ENCODE measurements at regions of chr11 and their contacts with region 1.

Region 1: DNA sequence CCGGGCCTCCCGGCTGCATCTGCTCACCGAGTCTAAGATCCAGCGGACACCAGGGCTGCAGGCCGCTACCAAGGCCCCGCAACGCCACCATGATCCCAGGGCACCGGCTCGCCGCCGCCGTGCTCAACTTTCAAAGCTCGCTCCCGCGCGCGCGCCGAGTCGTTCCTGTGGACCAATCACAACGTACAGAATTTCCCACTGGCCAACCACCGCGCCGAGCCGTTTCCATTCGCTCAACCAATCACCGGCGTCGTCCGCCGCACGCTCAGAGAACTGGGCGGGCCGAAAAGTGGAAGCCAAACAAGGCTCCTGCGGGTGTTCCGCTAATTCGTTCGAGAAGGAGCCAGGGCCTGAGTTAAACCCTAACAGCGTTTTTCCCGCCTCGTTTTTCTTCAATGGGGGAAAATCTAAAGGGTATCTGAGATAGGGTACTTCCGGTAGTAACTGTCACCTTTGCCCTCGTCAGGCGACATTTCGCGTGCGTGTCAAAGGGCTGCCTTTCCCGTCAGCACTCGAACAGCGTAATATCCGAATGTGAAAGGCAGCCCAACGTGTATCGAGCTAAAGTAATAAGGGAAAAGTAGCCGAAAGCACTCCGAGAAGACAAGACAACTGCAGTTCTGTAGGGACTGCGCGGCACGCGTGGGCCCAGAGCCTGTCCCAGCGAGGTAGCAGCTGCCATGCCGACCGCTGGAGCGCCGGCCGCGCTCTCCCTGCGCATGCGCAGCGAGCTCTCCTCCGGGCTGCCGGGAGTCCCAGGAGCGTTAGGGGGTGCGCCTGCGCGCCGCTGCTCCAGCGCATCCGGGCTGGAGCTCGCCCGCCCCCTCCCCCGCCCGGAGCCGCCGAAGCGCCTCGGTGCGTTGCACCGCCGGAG is at the starts of genes NCAPD3 and VPS26B:
- DNase-seq: peak; percentile 90 to 98 (median 96)
- ATAC-seq: peak; percentile 77
- H3K4me3 ChIP-seq: peak within 1 kb of the TSS; percentile 71 to 88
- H3K4me3 Mint-ChIP-seq: peak within 1 kb of the TSS; percentile 96
- H3K27ac ChIP-seq: peak within 1 kb of the TSS; percentile 84 to 96
- H3K27ac Mint-ChIP-seq: peak within 1 kb of the TSS; percentile 97
- H3K4me1 ChIP-seq: peaks cover 45% of the 10 kb centered on the region
- H3K4me1 Mint-ChIP-seq: peaks cover 65% of the 10 kb centered on the region
- H3K27me3 ChIP-seq: no peaks in the 10 kb centered on the region
- H3K27me3 Mint-ChIP-seq: no peaks in the 10 kb centered on the region
- CTCF ChIP-seq: no peak
- total RNA-seq, gene NCAPD3: 30.2 to 30.4 TPM
- total RNA-seq, gene VPS26B: 36.8 to 37.8 TPM

Region 2: DNA sequence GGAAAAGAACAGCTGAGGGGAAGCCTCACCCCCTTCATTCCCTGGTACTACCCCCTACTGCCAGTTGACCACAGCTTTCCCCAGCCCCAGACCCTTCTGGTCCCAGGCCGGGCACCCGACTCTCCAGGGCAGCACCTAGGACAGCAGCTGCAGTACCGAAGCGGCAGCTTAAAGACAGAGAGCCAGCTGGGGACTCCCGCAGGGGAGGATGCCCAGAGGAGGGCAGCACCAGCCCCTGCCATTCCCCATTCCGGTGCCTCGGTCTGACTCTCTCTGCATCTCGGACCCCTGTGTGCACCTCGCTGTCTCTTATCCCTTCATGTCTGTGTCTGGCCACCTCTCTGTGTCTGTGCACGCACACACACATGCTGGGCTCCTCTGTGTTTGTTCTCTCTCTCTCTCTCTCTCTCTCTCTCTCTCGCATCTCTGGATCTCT is 276.7 kb before region 1 on chr11:
- CTCF ChIA-PET with region 1: no interaction called
- POLR2A ChIA-PET with region 1: no interaction called
- intact Hi-C with region 1: loop called in 1 of 2 experiments (anchors 5 kb)
- DNase-seq: peak; percentile 41 to 81 (median 68)
- ATAC-seq: peak; percentile 32
- H3K4me3 ChIP-seq: peak overlapping the region in 1 of 2 experiments; percentile 7
- H3K4me3 Mint-ChIP-seq: peak overlapping the region; percentile 60
- H3K27ac ChIP-seq: no peak overlapping the region
- H3K27ac Mint-ChIP-seq: peak overlapping the region; percentile 79
- H3K4me1 ChIP-seq: peaks cover 58% of the 10 kb centered on the region
- H3K4me1 Mint-ChIP-seq: peaks cover 51% of the 10 kb centered on the region
- H3K27me3 ChIP-seq: peaks cover 0 to 10% of the 10 kb centered on the region in 2 experiments
- H3K27me3 Mint-ChIP-seq: no peaks in the 10 kb centered on the region
- CTCF ChIP-seq: peak; percentile 24

Region 3: DNA sequence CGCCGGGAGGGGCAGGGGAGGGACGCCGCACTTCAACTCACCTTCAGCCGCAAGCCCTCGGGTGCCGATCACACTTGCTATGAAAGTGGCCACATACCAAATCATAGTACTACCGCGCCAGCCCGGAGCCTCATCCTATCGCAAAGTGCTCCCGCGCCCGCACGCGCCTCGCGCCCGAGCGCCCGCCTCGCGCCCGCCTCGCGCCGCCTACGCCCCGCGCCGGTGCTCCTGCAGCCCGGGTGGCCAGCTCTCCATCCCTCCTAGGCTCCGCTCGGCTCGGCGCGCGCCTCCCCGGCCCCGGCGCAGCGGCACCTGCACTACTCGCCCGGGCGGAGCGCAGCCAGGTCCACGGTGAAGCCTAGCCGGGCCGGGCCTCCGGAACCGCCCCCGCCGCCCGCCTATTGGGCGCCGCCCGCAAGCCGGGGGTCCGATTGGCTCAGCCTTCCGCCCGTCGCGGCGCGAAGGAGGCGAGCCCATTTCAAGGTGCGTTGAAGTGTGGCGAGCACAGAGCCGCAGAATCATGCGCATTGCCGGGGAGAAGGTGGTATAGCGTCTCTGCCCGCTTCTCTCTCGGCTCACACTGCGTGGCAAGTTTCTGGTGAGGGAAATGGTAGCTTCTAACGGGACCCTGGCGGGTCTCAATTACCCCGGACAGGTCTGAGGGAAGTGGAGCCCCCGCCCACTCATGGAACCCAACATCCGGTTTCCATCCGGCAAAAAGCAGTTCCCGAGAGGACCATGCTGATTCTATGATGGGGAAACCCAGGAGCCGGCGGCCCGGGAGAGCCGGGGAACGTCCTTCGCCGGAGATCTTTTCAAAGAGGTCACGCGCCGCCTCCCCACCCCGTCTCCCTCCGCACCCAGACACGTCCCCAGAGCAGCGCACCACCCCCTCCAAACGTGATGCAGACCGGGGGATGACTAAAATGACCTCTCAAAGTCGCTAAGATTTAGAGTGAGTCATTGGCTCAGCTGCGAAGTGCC is 267.1 kb before region 1 on chr11 and contains the start of gene IGSF9B:
- CTCF ChIA-PET with region 1: no interaction called
- POLR2A ChIA-PET with region 1: no interaction called
- intact Hi-C with region 1: loop called (anchors 5 kb)
- DNase-seq: peak; percentile 82 to 95 (median 90)
- ATAC-seq: peak; percentile 93
- H3K4me3 ChIP-seq: peak within 1 kb of the TSS; percentile 67 to 81
- H3K4me3 Mint-ChIP-seq: peak within 1 kb of the TSS; percentile 90
- H3K27ac ChIP-seq: peak within 1 kb of the TSS; percentile 62 to 64
- H3K27ac Mint-ChIP-seq: peak within 1 kb of the TSS; percentile 86
- H3K4me1 ChIP-seq: peaks cover 29% of the 10 kb centered on the region
- H3K4me1 Mint-ChIP-seq: peaks cover 40% of the 10 kb centered on the region
- H3K27me3 ChIP-seq: peaks cover 0 to 7% of the 10 kb centered on the region in 2 experiments
- H3K27me3 Mint-ChIP-seq: peaks cover 8% of the 10 kb centered on the region
- CTCF ChIP-seq: no peak
- total RNA-seq, gene IGSF9B: 10.1 to 11.6 TPM

Region 4: DNA sequence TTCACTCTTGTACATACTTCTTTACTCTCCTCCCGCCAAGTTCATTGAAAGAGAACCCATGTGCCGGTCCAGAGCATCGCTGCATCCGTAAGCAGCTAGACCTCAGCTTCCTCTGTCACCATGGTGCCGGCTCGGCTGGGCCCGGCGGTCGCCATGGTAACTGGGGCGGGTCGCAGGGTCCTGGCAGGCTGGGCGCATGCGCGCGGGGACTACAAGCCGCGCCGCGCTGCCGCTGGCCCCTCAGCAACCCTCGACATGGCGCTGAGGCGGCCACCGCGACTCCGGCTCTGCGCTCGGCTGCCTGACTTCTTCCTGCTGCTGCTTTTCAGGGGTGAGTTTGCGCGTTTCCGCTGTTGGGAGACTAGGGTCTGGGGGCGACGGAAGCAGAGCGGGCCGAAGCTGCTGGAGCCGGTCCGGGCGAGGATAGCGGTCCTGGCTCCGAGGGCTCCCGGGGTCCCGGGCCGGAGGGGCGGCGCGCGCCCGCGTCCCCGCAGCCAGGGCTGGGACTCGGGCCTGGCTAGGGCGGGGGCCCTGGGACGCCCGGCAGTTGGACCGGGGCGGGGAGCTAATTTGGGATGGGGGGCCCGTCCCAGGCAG is 155.1 kb before region 1 on chr11 and contains the start of gene JAM3:
- CTCF ChIA-PET with region 1: no interaction called
- POLR2A ChIA-PET with region 1: interaction called, 3 read pairs
- intact Hi-C with region 1: loop called in 1 of 2 experiments (anchors 1 kb)
- DNase-seq: peak; percentile 95 to 99 (median 98)
- ATAC-seq: peak; percentile 91
- H3K4me3 ChIP-seq: peak within 1 kb of the TSS; percentile 52 to 58
- H3K4me3 Mint-ChIP-seq: peak within 1 kb of the TSS; percentile 94
- H3K27ac ChIP-seq: peak within 1 kb of the TSS in 1 of 2 experiments; percentile 50
- H3K27ac Mint-ChIP-seq: peak within 1 kb of the TSS; percentile 87
- H3K4me1 ChIP-seq: peaks cover 6% of the 10 kb centered on the region
- H3K4me1 Mint-ChIP-seq: peaks cover 17% of the 10 kb centered on the region
- H3K27me3 ChIP-seq: no peaks in the 10 kb centered on the region
- H3K27me3 Mint-ChIP-seq: peaks cover 1% of the 10 kb centered on the region
- CTCF ChIP-seq: no peak
- total RNA-seq, gene JAM3: 12.1 to 15.2 TPM

Region 5: DNA sequence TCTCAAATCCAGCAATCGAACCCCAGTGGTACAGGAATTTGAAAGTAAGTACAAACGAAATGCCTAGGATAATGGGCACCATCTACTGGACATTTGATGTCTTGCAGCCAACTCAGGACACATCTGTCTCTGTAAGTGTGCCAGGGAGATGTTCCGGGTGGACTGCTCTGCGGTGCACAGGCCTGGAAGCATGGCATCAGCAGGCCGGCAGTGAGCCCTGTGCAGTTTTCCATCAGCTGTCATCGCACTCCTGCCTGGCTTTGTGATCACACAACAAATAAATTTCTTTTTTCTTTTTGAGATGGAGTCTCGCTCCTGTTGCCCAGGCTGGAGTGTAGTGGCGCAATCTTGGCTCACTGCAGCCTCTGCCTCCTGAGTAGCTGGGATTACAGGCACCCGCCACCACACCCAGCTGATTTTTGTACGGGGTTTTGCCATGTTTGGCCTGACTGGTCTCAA is 84.2 kb before region 1 on chr11:
- CTCF ChIA-PET with region 1: no interaction called
- POLR2A ChIA-PET with region 1: no interaction called
- intact Hi-C with region 1: no loop called
- DNase-seq: peak; percentile 22 to 74 (median 45)
- ATAC-seq: peak; percentile 73
- H3K4me3 ChIP-seq: no peak overlapping the region
- H3K4me3 Mint-ChIP-seq: no peak overlapping the region
- H3K27ac ChIP-seq: no peak overlapping the region
- H3K27ac Mint-ChIP-seq: no peak overlapping the region
- H3K4me1 ChIP-seq: no peaks in the 10 kb centered on the region
- H3K4me1 Mint-ChIP-seq: no peaks in the 10 kb centered on the region
- H3K27me3 ChIP-seq: no peaks in the 10 kb centered on the region
- H3K27me3 Mint-ChIP-seq: no peaks in the 10 kb centered on the region
- CTCF ChIP-seq: peak; percentile 63

Region 6: DNA sequence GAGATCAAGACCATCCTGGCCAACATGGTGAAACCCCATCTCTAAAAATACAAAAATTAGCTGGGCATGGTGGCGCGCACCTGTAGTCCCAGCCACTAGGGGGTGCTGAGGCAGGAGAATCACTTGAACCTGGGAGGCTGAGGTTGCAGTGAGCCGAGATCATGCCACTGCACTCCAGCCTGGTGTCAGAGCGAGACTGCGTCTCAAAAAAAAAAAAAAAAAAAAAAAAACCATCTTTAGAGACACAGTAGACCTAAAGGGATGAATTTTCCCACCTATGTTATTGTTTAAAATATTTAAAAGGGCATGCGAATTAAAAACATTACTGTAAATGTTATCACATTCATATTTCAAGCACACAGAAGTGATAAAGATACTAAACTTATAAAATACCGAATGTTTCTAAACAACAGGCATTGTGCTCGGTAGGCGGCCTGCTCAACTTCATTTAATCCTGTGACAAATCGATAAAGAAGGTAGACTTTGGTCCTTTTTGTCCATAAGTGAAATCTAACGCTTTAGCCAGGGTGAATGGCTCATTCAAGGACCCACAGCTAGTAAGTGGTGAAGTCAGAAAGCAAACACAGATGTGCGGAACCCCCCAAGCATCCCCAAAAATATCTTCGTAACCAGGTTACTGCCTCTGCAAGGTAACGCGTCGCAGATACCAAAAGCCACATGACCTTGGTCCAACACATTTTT is 16.4 kb before region 1 on chr11:
- CTCF ChIA-PET with region 1: interaction called, 11 read pairs
- POLR2A ChIA-PET with region 1: interaction called, 5 read pairs
- intact Hi-C with region 1: loop called in 1 of 2 experiments (anchors 1 kb)
- DNase-seq: peak; percentile 37 to 76 (median 69)
- ATAC-seq: peak; percentile 36
- H3K4me3 ChIP-seq: no peak overlapping the region
- H3K4me3 Mint-ChIP-seq: no peak overlapping the region
- H3K27ac ChIP-seq: no peak overlapping the region
- H3K27ac Mint-ChIP-seq: no peak overlapping the region
- H3K4me1 ChIP-seq: no peaks in the 10 kb centered on the region
- H3K4me1 Mint-ChIP-seq: peaks cover 2% of the 10 kb centered on the region
- H3K27me3 ChIP-seq: no peaks in the 10 kb centered on the region
- H3K27me3 Mint-ChIP-seq: no peaks in the 10 kb centered on the region
- CTCF ChIP-seq: peak; percentile 92

Region 7: DNA sequence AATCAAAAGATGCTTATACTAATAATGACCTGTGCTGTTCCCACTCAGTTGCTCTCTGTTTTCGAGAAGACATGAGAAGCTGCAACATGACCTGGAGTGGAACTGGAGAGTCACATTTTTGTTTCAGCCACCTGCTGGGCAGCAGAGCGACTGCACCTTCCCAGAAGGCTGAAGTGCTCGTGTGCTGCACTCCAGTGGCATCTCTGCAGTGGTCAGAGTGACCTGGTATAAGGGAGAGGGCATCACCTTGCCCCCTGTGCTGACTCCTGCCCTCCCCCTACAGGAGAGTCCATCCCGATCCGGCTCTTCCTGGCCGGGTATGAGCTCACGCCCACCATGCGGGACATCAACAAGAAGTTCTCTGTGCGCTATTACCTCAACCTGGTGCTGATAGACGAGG is 20.6 kb after region 1 on chr11:
- CTCF ChIA-PET with region 1: interaction called, 20 read pairs
- POLR2A ChIA-PET with region 1: interaction called, 16 read pairs
- intact Hi-C with region 1: loop called (anchors 2 kb)
- DNase-seq: peak in 4 of 9 experiments; percentile 30 to 59 (median 41)
- ATAC-seq: peak; percentile 81
- H3K4me3 ChIP-seq: no peak overlapping the region
- H3K4me3 Mint-ChIP-seq: no peak overlapping the region
- H3K27ac ChIP-seq: no peak overlapping the region
- H3K27ac Mint-ChIP-seq: peak overlapping the region; percentile 24
- H3K4me1 ChIP-seq: no peaks in the 10 kb centered on the region
- H3K4me1 Mint-ChIP-seq: no peaks in the 10 kb centered on the region
- H3K27me3 ChIP-seq: no peaks in the 10 kb centered on the region
- H3K27me3 Mint-ChIP-seq: no peaks in the 10 kb centered on the region
- CTCF ChIP-seq: peak; percentile 32

Region 8: DNA sequence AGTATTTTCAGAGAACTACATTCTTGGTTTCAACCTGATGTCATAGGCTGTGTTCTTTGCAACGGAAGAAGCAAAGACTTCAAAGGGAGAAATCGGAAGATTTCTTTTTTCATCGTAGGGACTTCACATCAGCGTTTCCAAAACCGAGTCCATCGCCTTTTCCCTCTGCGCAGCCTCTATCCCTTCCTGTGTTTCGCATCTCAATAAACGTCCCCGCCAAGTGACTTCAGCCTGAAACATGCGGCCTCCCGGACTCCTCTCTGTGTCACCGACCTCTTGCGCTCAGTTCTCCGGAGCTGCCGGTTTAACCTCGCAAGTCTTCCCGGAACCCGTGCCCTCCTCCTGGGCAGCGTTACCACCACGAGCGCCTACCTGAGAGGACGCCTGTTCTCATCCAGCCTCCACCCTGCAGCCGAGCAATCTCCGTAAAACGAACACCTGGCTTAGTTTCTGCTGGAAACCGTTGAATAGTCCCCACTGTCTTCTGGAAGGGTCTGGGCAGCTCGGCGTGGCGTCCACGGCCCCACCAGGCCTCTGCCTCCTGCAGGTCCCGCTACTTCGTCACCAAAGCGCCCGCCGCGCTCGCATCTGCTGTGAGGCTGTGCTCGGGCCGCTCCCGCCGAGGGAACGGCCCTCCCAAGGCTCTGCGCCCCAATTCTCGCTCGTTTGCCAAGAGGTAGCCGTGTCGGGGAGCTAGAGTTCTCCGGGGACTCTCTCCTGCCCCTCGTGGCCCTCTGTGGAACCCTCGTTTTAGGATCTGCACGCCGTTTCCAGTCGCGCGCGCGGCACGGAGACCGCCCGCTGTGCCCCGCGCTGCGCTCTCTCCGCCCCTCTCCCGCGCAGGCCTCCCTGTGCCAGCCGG is 51.7 kb after region 1 on chr11 and contains the start of gene GLB1L3:
- CTCF ChIA-PET with region 1: interaction called, 4 read pairs
- POLR2A ChIA-PET with region 1: interaction called, 9 read pairs
- intact Hi-C with region 1: loop called in 1 of 2 experiments (anchors 1 kb)
- DNase-seq: peak; percentile 54 to 88 (median 78)
- ATAC-seq: peak; percentile 92
- H3K4me3 ChIP-seq: peak within 1 kb of the TSS; percentile 64 to 65
- H3K4me3 Mint-ChIP-seq: peak within 1 kb of the TSS; percentile 90
- H3K27ac ChIP-seq: peak within 1 kb of the TSS; percentile 32 to 63
- H3K27ac Mint-ChIP-seq: peak within 1 kb of the TSS; percentile 81
- H3K4me1 ChIP-seq: peaks cover 27% of the 10 kb centered on the region
- H3K4me1 Mint-ChIP-seq: peaks cover 46% of the 10 kb centered on the region
- H3K27me3 ChIP-seq: peaks cover 0 to 3% of the 10 kb centered on the region in 2 experiments
- H3K27me3 Mint-ChIP-seq: peaks cover 8% of the 10 kb centered on the region
- CTCF ChIP-seq: peak; percentile 65
- total RNA-seq, gene GLB1L3: 0.58 to 0.87 TPM